Heart left ventricle (tissue), 16 donors: ENCODE measurements at regions of chr17 and their contacts with region 1.

Region 1: GRCh38 chr17:1648963-1649843 is 463 bp downstream of the RILP start:
- DNase-seq: peak; percentile 91 to 98 (median 95)
- ATAC-seq: peak; percentile 25 to 67 (median 50)
- H3K4me3 ChIP-seq: peak overlapping the region; percentile 68 to 99 (median 83)
- H3K27ac ChIP-seq: peak overlapping the region; percentile 93 to 100 (median 99)
- H3K4me1 ChIP-seq: peaks cover 7 to 59% (median 48%) of the 10 kb centered on the region in 12 donors
- H3K27me3 ChIP-seq: no peaks in the 10 kb centered on the region
- CTCF ChIP-seq: peak in 11 of 12 donors; percentile 73 to 97 (median 87)
- POLR2A ChIP-seq: peak; percentile 61 to 89

Region 2: GRCh38 chr17:1260086-1260769 is 389.0 kb before region 1 on chr17:
- intact Hi-C with region 1: loop called in 2 of 10 experiments (anchors 5 to 10 kb)
- DNase-seq: no peak
- ATAC-seq: peak in 1 of 4 donors; percentile 19
- H3K4me3 ChIP-seq: peak overlapping the region; percentile 9 to 66 (median 51)
- H3K27ac ChIP-seq: peak overlapping the region in 2 of 12 donors; percentile 40 to 77
- H3K4me1 ChIP-seq: peaks cover 0 to 21% (median 8%) of the 10 kb centered on the region in 12 donors
- H3K27me3 ChIP-seq: peaks cover 0 to 12% (median 0%) of the 10 kb centered on the region in 9 donors
- CTCF ChIP-seq: no peak
- POLR2A ChIP-seq: no peak

Region 3: DNA sequence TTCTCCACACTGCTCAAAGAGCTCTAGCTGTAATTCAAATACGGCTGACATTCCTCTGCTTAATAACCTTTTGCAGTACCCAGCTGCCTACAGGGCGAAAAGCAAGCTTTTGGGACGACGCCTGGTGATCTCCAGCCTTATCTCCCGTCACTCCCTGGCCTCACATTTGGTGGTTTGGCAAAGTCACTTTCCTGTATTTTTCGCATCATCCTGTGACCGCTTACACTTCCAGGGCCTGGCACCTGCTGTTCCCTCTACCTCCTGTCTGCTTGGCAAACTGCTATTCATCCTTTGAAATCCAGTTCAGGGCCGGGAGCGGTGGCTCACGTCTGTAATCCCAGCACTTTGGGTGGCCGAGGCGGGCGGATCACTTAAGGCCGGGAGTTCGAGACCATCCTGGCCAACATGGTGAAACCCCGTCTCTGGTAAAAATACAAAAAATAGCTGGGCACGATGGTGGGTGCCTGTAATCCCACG is 381.7 kb before region 1 on chr17:
- intact Hi-C with region 1: loop called in 1 of 10 experiments (anchors 10 kb)
- DNase-seq: no peak
- ATAC-seq: peak; percentile 13 to 48 (median 20)
- H3K4me3 ChIP-seq: peak overlapping the region; percentile 56 to 87 (median 70)
- H3K27ac ChIP-seq: peak overlapping the region; percentile 84 to 93 (median 90)
- H3K4me1 ChIP-seq: peaks cover 0 to 27% (median 11%) of the 10 kb centered on the region in 12 donors
- H3K27me3 ChIP-seq: peaks cover 2 to 30% (median 23%) of the 10 kb centered on the region in 9 donors
- CTCF ChIP-seq: no peak
- POLR2A ChIP-seq: no peak

Region 4: DNA sequence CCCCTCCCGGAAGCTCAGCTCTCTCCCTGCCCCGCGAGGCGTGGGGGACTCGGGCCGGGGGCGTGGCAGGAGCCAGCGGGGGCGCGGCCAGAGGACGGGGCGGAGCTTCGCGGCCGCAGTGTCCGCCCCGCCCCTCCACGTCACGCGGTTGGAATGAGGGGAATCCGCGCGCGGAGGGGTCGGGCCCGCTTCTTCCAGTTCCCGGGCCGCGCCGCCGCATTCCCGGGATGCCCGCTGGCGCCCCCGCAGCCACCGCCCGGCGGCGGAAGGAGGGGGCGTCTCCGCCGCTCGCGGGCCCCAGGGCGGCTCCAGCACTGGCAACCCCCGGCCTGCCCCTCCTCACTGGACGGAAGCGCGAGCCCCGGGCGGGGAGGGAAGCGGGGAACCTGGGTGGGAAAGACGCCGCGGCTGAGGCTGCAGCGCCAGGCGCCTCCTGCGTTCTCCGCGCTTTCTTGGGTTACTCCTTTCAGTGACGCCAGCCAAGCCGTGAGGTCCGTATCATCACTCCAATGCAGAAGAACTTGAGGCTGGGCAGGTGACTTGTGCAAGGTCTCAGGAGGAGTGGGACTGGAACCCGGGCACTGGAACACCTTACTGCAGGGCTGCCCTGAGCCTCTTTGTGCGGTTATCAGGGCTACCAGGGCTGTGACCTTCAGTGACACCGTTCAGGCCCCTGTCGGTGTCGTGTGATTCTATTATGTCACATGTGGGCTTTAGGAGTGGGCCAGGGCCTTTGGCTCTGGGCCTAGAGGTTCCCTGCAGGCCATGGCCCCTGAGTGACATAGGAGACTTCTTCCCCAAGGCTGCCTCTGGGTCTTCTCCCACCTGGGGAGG is 161.0 kb before region 1 on chr17:
- intact Hi-C with region 1: loop called in 2 of 10 experiments (anchors 10 kb)
- DNase-seq: peak; percentile 90 to 94 (median 94)
- ATAC-seq: peak; percentile 45 to 71 (median 67)
- H3K4me3 ChIP-seq: peak overlapping the region; percentile 26 to 85 (median 70)
- H3K27ac ChIP-seq: peak overlapping the region; percentile 94 to 100 (median 99)
- H3K4me1 ChIP-seq: peaks cover 7 to 86% (median 68%) of the 10 kb centered on the region in 12 donors
- H3K27me3 ChIP-seq: no peaks in the 10 kb centered on the region
- CTCF ChIP-seq: peak in 5 of 12 donors; percentile 9 to 18 (median 15)
- POLR2A ChIP-seq: peak in 1 of 2 donors; percentile 69

Region 5: DNA sequence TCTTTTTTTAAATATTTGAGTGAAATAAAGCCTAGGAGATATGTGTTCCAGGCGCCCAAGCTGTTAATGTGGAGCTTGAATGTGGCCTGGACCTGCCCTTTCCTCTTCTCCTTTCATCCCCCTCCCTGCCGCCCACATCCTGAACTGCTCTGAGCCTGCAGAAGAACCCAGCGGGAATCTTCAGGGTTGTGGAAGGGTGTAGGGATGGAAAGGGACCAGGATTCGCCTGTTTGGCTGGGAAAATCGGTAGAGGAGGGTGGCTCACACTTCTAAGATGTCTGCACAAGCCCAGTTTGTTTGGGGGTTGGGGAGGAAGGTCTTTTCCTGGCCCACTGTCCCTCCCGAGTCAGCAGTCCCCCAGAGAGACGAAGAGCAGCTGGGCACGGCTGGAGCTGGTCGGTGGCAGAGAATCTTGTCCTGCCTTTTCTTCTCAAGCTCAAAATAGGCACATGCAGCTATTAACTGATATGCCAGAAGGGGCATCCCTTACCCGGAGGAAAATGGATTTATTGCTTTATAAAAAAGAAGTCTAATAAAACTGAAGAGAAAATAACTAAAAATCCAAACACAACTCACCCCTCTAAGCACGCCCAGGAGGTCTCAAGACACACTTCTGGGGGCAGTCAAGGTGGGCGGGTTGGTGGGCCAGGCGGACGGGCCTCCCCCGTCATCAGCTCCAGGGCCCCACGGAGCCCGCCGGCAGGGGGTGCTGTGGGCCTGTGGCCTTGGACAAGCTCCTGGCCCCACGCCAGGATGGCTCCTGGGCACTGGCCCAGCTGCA is 75.1 kb before region 1 on chr17:
- intact Hi-C with region 1: loop called in 8 of 10 experiments (anchors 1 to 5 kb)
- DNase-seq: peak; percentile 85 to 95 (median 86)
- ATAC-seq: peak; percentile 42 to 73 (median 64)
- H3K4me3 ChIP-seq: peak overlapping the region in 1 of 12 donors; percentile 7
- H3K27ac ChIP-seq: peak overlapping the region in 11 of 12 donors; percentile 15 to 96 (median 59)
- H3K4me1 ChIP-seq: peaks cover 0 to 53% (median 35%) of the 10 kb centered on the region in 12 donors
- H3K27me3 ChIP-seq: no peaks in the 10 kb centered on the region
- CTCF ChIP-seq: peak; percentile 93 to 98 (median 97)
- POLR2A ChIP-seq: peak in 1 of 2 donors; percentile 27

Region 6: DNA sequence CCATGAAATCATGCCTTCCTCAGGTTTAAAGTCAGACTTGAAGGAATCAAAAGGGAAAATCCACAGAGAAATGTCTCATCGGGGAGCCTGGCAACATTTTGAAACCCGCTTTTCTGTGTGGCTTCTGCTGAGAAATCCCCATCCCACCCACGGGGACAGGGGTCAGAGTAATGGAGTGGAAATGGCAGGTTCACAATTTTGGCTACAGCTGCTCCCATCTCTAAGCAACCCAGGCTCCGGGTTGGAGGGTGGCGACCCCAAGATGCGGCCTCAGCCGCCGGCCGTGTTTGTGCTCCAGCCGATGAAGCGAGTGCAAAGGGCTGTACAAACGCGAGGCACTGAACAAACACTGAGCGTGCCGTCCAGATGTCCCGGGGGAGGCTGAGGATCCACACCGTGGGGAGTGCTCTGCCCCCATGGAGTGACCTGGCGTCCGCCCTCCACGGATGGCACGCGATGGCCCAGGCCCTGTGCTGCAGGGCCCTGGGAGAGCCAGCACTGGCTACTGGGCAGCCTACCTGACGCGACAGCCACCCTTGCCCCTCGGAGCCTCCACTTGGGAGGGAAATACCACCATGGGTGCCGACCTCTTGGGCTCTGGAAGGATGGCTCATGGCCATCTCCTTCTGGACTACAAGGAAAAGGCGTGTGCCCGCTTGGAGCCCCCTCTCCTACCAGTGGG is 42.7 kb before region 1 on chr17:
- intact Hi-C with region 1: no loop called
- DNase-seq: no peak
- ATAC-seq: peak in 1 of 4 donors; percentile 8
- H3K4me3 ChIP-seq: no peak overlapping the region
- H3K27ac ChIP-seq: peak overlapping the region in 7 of 12 donors; percentile 15 to 91 (median 37)
- H3K4me1 ChIP-seq: peaks cover 0 to 52% (median 0%) of the 10 kb centered on the region in 12 donors
- H3K27me3 ChIP-seq: no peaks in the 10 kb centered on the region
- CTCF ChIP-seq: no peak
- POLR2A ChIP-seq: no peak

Region 7: DNA sequence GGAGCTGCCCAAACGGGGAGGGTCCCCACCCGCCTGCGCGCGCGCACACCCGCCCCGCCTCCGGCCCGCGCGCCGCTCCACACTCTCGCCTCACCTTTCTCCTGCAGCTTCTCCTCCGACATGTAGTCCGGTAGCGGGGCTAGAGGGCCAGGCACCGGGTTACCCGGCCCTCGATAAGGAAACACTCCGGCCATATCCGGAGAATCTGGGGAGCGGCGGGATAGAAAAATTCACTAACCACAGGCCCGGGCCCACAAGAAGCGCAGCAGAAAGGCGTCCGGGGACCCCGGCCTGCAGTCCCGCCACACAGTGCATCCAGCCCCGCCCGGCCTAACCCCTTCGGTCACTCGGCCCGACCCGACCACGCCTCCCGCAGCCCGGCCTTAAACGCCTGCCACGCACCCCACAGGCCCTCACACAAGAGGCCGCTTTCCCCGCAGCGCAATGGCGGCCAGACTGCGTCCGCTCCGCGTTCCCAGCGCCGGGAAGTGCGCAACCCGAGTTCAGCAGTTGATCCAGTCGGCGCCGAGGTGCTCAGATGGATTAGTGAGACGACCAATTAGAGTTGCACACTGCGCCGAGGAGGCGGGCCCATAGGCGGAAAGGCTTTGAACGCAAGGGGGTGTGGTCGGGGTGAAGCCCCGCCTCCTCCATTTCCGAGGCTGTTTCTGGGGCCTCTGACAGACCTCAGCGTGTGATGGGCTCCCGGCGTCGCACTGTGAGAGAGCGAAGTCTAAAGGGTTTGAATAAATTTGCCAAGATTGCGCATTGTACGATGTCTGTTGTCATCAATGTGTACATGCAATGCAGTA is 35.4 kb after region 1 on chr17 and contains the start of gene PRPF8:
- intact Hi-C with region 1: no loop called
- DNase-seq: peak; percentile 97 to 98 (median 98)
- ATAC-seq: peak; percentile 100
- H3K4me3 ChIP-seq: peak within 1 kb of the TSS; percentile 72 to 98 (median 80)
- H3K27ac ChIP-seq: peak within 1 kb of the TSS; percentile 86 to 99 (median 94)
- H3K4me1 ChIP-seq: peaks cover 0 to 25% (median 20%) of the 10 kb centered on the region in 12 donors
- H3K27me3 ChIP-seq: no peaks in the 10 kb centered on the region
- CTCF ChIP-seq: peak in 2 of 12 donors; percentile 10 to 11
- POLR2A ChIP-seq: peak; percentile 89 to 91
- total RNA-seq, gene PRPF8: 119 to 195 (median 174) TPM